Activated CD4-positive, alpha-beta T cell treated with anti-CD3 and anti-CD28 coated beads for 36 hours (primary cell): ENCODE measurements at regions of chr15 and their contacts with region 1.

Region 1: GRCh38 chr15:100341662-100342560 is at the start of gene ADAMTS17:
- DNase-seq: peak; percentile 96
- ATAC-seq: peak; percentile 99
- H3K4me3 Mint-ChIP-seq: peak within 1 kb of the TSS; percentile 54
- H3K27ac Mint-ChIP-seq: no peak within 1 kb of the TSS
- H3K4me1 Mint-ChIP-seq: peaks cover 12% of the 10 kb centered on the region
- H3K27me3 Mint-ChIP-seq: peaks cover 2% of the 10 kb centered on the region
- total RNA-seq, gene ADAMTS17: 0.49 to 0.57 TPM

Region 2: GRCh38 chr15:99250494-99251435 is 1091.1 kb before region 1 on chr15:
- CTCF ChIA-PET with region 1: no interaction called
- POLR2A ChIA-PET with region 1: no interaction called
- intact Hi-C with region 1: loop called in 1 of 2 experiments (anchors 5 kb)
- DNase-seq: peak; percentile 98
- ATAC-seq: peak; percentile 99
- H3K4me3 Mint-ChIP-seq: no peak overlapping the region
- H3K27ac Mint-ChIP-seq: peak overlapping the region; percentile 95
- H3K4me1 Mint-ChIP-seq: peaks cover 22% of the 10 kb centered on the region
- H3K27me3 Mint-ChIP-seq: no peaks in the 10 kb centered on the region

Region 3: DNA sequence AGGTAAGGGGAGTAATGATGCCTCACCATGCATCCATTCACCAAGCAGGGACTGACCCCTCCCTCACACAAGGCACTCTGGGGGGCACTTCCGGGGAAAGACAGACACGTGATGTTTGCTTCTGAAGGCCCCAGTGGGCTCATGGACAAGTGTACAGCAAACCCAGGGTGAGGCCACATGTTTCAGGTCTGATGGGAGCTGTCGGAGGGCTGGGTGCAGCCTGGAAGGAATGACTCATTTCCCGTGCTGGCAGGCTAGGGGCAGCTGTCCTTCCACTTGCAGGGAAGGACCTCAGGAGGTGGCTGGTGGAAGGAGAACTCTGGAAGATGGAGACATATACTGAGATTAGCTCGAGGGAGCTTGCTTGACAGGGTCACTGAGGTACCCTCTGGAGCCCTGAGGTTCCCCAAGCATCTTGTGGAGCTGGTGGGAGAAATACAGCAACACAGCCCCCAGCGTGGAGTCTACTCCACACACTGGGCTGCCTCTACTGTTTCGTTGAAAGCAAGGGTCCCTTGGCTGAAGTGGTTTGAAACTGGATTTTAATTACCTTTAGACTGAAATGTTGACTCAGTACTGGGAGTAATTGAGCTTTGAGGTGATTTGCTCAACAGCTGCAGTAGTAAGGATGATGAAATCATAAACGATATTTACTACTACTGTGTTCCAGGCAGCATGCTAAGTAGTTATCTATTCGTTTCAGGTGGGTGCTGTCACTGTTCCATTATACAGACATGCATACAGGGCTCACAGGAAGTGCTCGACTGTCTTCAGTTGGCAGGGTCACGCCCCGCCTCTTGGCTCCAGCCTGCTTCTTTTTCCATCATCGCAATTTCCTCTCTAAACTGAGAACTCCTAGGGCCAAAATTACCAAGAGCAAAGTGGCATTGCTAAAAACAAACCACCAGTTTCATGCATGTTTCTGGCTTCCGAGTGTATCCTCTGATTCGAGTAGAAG is 230.5 kb before region 1 on chr15:
- CTCF ChIA-PET with region 1: interaction called, 3 read pairs
- POLR2A ChIA-PET with region 1: no interaction called
- intact Hi-C with region 1: loop called in 1 of 2 experiments (anchors 10 kb)
- DNase-seq: peak; percentile 74
- ATAC-seq: peak; percentile 94
- H3K4me3 Mint-ChIP-seq: peak overlapping the region; percentile 23
- H3K27ac Mint-ChIP-seq: peak overlapping the region; percentile 99
- H3K4me1 Mint-ChIP-seq: peaks cover 46% of the 10 kb centered on the region
- H3K27me3 Mint-ChIP-seq: no peaks in the 10 kb centered on the region

Region 4: DNA sequence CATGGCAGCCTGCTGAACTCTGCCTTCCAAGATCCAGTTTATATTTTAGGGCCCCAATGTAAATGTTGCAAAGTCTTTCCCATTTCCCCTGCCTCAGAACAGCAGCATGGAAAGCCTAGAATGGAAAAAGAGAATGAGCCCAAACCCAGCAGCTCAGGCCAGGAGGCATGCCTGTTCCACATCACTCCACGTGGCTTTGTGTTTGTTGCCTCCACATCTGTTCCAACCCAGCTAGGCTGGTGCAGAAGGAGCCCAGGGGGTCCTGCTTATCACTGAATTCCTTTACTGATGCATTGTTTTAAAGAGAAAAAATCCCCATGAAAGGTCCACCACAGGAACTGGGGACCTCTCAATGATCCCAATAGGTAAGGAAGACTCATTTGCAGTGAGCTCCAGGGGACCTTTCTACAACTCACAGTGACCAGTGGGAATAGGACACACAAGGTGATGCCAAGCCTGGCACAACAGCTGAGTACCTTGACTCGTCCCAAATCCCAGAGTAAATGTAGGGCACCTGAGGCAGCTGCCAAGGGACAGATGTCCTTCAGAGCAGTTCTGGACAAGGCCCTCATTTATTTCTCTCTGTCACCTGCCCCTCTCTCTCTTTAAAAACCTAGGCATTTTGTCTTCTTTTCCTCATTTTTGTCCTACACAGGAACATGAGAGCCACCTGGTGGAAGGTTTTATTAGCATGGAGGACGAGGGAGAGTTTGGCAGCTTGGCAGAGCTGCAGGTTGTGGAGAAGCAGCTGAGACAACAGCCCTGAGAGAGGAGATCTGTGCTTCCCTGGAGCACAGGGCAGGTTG is 41.6 kb after region 1 on chr15:
- CTCF ChIA-PET with region 1: interaction called, 5 read pairs
- POLR2A ChIA-PET with region 1: no interaction called
- intact Hi-C with region 1: loop called in 1 of 2 experiments (anchors 5 kb)
- DNase-seq: peak; percentile 26
- ATAC-seq: no peak
- H3K4me3 Mint-ChIP-seq: no peak overlapping the region
- H3K27ac Mint-ChIP-seq: no peak overlapping the region
- H3K4me1 Mint-ChIP-seq: no peaks in the 10 kb centered on the region
- H3K27me3 Mint-ChIP-seq: peaks cover 1% of the 10 kb centered on the region

Region 5: DNA sequence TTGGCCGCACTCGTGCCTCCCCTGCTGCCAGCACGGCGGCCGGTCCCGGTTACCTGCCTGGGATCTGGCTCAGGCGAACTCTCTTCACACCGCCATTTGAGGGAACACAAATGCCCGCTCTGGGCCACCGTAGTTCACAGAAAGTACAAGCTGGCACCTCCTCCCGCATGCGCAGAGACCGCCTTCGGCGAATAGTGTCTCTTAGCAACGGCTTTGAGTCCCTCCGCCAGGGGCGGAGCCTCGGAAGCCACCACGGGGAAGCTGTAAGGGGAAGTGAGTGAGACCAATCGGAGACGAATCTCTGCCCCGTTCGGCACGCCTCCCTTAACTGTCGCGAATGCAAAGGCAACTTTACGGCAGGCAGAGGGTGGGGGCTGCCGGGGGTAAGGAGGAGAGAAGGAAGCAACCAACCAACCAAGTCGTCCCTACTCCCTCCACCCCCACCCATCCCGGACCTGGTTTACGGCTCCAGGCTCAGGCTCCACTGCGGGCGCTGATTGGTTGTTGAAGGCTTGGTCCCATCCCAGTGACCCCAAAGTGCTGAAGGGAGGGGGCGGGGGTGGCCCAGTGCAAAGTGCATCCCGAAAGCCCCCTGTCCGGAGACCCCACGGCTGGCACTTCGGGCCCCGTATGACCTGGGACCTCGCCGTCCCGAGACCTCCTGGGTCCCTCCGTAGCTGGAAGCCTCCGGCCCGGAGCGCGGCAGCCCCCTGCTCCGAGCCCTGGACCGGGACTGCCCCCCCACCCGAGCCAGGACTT is 260.3 kb after region 1 on chr15 and contains the starts of genes ASB7 and LINS1:
- CTCF ChIA-PET with region 1: interaction called, 4 read pairs
- POLR2A ChIA-PET with region 1: no interaction called
- intact Hi-C with region 1: loop called (anchors 1 to 2 kb)
- DNase-seq: peak; percentile 100
- ATAC-seq: peak; percentile 85
- H3K4me3 Mint-ChIP-seq: no peak within 1 kb of the TSS
- H3K27ac Mint-ChIP-seq: no peak within 1 kb of the TSS
- H3K4me1 Mint-ChIP-seq: peaks cover 58% of the 10 kb centered on the region
- H3K27me3 Mint-ChIP-seq: no peaks in the 10 kb centered on the region
- total RNA-seq, gene ASB7: 16.6 to 19.5 TPM
- total RNA-seq, gene LINS1: 41.7 to 43.8 TPM

Region 6: GRCh38 chr15:101008158-101009139 is 666.5 kb after region 1 on chr15:
- CTCF ChIA-PET with region 1: interaction called, 4 read pairs
- POLR2A ChIA-PET with region 1: no interaction called
- intact Hi-C with region 1: loop called in 1 of 2 experiments (anchors 2 kb)
- DNase-seq: peak; percentile 92
- ATAC-seq: peak; percentile 92
- H3K4me3 Mint-ChIP-seq: peak overlapping the region; percentile 82
- H3K27ac Mint-ChIP-seq: peak overlapping the region; percentile 75
- H3K4me1 Mint-ChIP-seq: peaks cover 19% of the 10 kb centered on the region
- H3K27me3 Mint-ChIP-seq: peaks cover 3% of the 10 kb centered on the region